Endothelial cell of umbilical vein (primary cell): ENCODE measurements at regions of chr16 and their contacts with region 1.

Region 1: DNA sequence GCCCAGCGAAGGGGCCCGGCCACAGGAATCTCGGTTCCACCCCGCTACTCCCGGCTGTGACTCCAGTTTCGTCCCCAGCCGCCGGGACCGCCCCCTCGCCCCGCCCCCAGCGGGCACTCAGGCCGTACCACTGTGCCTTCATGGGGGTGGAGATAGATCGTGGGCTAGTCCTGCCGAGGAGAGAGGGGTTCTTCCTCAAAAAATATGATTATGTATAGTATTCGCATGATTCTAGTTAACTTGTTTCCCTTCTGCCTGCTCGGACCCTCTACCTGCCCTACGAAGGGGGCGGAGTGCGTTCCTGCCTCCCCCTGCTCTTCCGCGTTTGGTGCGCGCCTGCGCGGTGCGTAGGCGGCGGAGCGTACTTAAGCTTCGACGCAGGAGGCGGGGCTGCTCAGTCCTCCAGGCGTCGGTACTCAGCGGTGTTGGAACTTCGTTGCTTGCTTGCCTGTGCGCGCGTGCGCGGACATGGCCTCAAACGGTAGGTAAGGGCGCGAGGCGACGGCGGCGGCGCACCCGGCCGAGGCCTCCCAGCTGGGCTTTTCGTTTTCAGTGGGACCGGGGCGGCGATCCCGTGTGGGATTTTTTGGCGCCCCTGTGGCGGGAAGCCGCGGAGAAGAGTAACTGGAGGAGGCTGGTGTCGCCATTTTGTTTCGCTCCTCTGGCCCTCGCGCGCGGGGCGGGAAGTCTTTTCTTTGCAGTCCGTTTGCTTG is at the start of gene FUS:
- DNase-seq: peak; percentile 90
- H3K4me3 ChIP-seq: peak within 1 kb of the TSS; percentile 77 to 100 (median 95)
- H3K27ac ChIP-seq: peak within 1 kb of the TSS; percentile 91
- H3K4me1 ChIP-seq: peaks cover 22% of the 10 kb centered on the region
- H3K27me3 ChIP-seq: no peaks in the 10 kb centered on the region
- CTCF ChIP-seq: no peak
- POLR2A ChIP-seq: peak; percentile 100
- total RNA-seq, gene FUS: 569 and 574 TPM in 2 replicates

Region 2: DNA sequence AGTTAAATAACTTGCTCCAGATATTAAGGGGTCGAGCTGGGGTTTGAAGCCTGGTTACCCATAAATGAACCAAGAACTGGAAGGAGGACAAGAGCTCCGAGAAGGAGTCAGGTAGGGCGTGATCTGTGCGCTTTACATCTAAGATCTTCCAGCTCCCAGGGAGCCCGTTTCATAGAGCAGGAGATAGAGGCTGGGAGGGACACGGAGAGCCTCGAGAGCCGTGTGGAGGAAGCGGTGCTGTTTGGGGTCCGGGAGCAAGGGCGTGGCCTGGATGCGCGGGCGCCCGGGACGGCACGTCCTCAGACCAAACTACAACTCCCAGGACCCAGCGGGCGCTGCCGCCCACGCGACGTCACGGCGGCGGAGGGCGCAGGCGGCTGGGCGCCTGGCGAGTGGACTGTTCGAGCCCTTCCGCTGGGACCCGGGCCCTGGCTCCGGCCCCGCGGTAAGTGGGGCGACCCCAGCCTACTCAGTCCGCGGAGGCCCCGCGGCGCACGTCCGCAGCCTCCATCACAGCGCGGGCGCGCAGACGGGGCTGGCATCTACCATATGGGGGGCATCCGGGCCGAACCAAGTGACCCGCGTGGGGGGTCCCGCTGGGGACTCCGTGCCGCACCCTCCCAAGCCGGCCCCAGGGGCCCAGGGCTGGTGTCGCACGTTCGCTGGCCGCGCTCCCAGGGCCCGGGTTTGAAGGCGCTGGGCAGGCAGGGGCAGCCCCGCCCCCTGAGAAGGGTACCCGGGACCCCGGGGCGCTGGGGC is 71.7 kb before region 1 on chr16 and contains the start of gene BCKDK:
- CTCF ChIA-PET with region 1: no interaction called
- POLR2A ChIA-PET with region 1: no interaction called
- dilution Hi-C with region 1: no loop called
- intact Hi-C with region 1: loop called (anchors 2 kb)
- DNase-seq: peak; percentile 65
- H3K4me3 ChIP-seq: peak within 1 kb of the TSS; percentile 63 to 98 (median 66)
- H3K27ac ChIP-seq: peak within 1 kb of the TSS; percentile 53
- H3K4me1 ChIP-seq: peaks cover 12% of the 10 kb centered on the region
- H3K27me3 ChIP-seq: no peaks in the 10 kb centered on the region
- CTCF ChIP-seq: no peak
- POLR2A ChIP-seq: peak; percentile 72
- total RNA-seq, gene BCKDK: 56.5 and 57.8 TPM in 2 replicates

Region 3: DNA sequence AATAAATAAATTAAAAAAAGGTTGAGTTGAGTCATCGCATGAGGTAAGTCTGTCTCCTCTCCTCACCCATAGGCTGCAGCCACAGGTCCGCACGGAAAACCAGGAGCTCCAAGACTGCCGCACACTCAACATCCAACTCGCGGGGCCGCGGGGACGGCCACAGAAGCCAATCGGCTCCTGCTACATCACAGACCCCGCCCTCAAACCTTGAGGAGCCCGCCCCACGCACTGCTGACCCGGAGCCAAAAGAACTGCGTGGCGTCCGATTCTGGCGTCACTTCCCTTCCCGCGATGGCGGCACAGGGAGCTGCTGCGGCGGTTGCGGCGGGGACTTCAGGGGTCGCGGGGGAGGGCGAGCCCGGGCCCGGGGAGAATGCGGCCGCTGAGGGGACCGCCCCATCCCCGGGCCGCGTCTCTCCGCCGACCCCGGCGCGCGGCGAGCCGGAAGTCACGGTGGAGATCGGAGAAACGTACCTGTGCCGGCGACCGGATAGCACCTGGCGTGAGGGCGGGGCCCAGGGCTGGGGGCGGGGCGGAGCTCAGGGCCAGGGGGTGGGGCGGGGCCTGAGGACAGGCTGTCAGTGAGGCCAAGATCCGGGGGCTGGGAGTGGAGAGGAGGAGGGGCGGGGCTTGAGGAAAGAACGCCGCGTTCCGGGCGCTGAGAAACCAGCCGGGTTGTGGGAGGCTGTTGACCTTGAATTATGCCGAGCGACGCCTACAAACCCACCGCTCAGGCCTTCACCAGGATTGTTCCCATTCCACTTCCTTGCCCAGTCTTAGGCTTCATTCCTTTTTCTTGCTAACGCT is 62.3 kb before region 1 on chr16 and contains the start of gene KAT8:
- CTCF ChIA-PET with region 1: no interaction called
- POLR2A ChIA-PET with region 1: interaction called, 13 read pairs
- dilution Hi-C with region 1: no loop called
- intact Hi-C with region 1: loop called (anchors 2 kb)
- DNase-seq: peak; percentile 98
- H3K4me3 ChIP-seq: peak within 1 kb of the TSS; percentile 54 to 79 (median 79)
- H3K27ac ChIP-seq: peak within 1 kb of the TSS; percentile 77
- H3K4me1 ChIP-seq: peaks cover 7% of the 10 kb centered on the region
- H3K27me3 ChIP-seq: no peaks in the 10 kb centered on the region
- CTCF ChIP-seq: no peak
- POLR2A ChIP-seq: peak; percentile 84
- total RNA-seq, gene KAT8: 42.1 and 42.8 TPM in 2 replicates

Region 4: DNA sequence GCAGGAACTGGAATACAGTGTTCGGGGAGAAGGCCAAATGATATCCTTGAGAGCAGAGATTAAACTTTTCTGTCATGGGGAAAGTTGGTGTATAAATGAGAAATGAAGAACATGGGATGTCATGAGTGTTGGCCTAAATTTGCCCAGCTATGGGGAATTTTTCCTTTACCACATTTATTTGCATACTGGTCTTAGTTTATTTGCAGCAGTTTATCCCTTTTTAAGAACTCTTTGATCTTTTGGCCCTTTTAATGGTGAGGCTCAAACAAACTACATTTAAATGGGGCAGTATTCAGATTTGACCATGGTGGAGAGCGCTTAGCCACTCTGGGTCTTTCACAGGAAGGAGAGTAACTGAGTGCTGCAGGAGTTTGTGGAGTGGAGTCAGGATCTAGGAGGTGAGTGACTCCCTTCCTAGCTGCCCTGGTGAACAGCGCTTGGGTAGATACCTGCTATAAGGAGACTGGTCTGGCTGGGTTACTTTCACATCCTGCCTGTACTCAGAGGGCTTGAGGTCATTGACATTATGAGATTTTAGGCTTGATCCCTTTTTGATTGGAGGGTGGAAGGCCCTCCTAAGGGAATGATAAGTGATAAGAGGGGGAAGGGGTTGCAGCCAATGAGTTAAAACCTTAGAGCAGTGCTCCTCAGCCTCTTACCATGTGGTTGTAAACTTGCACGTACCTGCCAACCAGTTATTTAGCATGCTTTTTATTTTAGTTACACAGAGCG is 12.0 kb after region 1 on chr16:
- CTCF ChIA-PET with region 1: no interaction called
- POLR2A ChIA-PET with region 1: interaction called, 11 read pairs
- dilution Hi-C with region 1: no loop called
- intact Hi-C with region 1: no loop called
- DNase-seq: no peak
- H3K4me3 ChIP-seq: no peak overlapping the region
- H3K27ac ChIP-seq: no peak overlapping the region
- H3K4me1 ChIP-seq: no peaks in the 10 kb centered on the region
- H3K27me3 ChIP-seq: no peaks in the 10 kb centered on the region
- CTCF ChIP-seq: no peak
- POLR2A ChIP-seq: no peak

Region 5: GRCh38 chr16:31229501-31229900 is 49.6 kb after region 1 on chr16:
- CTCF ChIA-PET with region 1: no interaction called
- POLR2A ChIA-PET with region 1: no interaction called
- dilution Hi-C with region 1: no loop called
- intact Hi-C with region 1: no loop called
- DNase-seq: no peak
- H3K4me3 ChIP-seq: no peak overlapping the region
- H3K27ac ChIP-seq: no peak overlapping the region
- H3K4me1 ChIP-seq: no peaks in the 10 kb centered on the region
- H3K27me3 ChIP-seq: no peaks in the 10 kb centered on the region
- CTCF ChIP-seq: no peak
- POLR2A ChIP-seq: no peak